Mammary epithelial cell (primary cell): ENCODE measurements at regions of chr3 and their contacts with region 1.

Region 1: GRCh38 chr3:196251918-196252317 is 35.6 kb downstream of the SLC51A start:
- DNase-seq: no peak
- H3K4me3 ChIP-seq: no peak overlapping the region
- H3K27ac ChIP-seq: no peak overlapping the region
- H3K4me1 ChIP-seq: no peaks in the 10 kb centered on the region
- H3K27me3 ChIP-seq: no peaks in the 10 kb centered on the region
- CTCF ChIP-seq: no peak

Region 2: DNA sequence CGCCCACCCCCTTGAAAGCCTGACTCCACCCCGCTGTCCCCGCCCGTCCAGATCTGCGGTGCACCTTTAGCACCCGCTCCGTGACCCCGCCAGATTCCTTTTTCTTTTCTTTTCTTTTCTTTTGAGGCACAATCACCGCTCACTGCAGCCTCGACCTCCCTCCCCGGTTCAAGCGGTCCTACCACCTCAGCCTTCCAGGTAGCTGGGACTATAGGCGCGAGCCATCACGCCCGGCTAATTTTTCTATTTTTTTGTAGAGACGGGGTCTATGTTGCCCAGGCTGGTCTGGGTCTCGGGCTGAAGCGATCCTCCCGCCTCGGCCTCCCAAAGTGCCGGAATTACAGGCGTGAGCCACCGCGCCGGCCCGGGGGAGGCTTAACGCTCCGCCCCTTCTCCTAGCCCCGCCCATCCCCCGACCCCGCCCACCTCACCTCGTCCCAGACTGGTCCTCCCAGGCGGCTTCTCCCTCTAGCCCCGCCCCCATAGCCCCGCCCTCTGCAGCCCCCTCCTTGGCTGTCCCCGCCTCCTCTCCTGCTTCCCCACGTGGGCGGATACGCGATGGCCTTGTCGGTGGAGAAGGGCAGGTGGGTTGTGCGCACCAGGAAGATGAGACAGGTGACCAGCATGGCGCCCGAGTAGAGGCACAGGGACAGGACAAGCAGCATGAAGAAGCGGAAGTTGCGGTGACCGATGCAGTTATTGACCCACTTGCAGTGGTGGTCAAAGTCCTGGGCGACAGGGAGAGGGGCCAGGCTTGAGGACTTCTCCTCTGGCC is 43.9 kb before region 1 on chr3:
- CTCF ChIA-PET with region 1: no interaction called
- dilution Hi-C with region 1: no loop called
- in situ Hi-C with region 1: no loop called
- intact Hi-C with region 1: no loop called
- DNase-seq: peak; percentile 30
- H3K4me3 ChIP-seq: peak overlapping the region; percentile 24 to 52 (median 38)
- H3K27ac ChIP-seq: no peak overlapping the region
- H3K4me1 ChIP-seq: no peaks in the 10 kb centered on the region
- H3K27me3 ChIP-seq: no peaks in the 10 kb centered on the region
- CTCF ChIP-seq: no peak

Region 3: GRCh38 chr3:196287440-196288148 is 35.7 kb after region 1 on chr3 and contains the start of gene PCYT1A:
- CTCF ChIA-PET with region 1: no interaction called
- dilution Hi-C with region 1: no loop called
- in situ Hi-C with region 1: no loop called
- intact Hi-C with region 1: loop called (anchors 1 kb)
- DNase-seq: peak; percentile 96
- H3K4me3 ChIP-seq: peak within 1 kb of the TSS; percentile 69 to 94 (median 87)
- H3K27ac ChIP-seq: peak within 1 kb of the TSS; percentile 90
- H3K4me1 ChIP-seq: peaks cover 13% of the 10 kb centered on the region
- H3K27me3 ChIP-seq: no peaks in the 10 kb centered on the region
- CTCF ChIP-seq: no peak
- total RNA-seq, gene PCYT1A: 103 to 175 TPM

Region 4: DNA sequence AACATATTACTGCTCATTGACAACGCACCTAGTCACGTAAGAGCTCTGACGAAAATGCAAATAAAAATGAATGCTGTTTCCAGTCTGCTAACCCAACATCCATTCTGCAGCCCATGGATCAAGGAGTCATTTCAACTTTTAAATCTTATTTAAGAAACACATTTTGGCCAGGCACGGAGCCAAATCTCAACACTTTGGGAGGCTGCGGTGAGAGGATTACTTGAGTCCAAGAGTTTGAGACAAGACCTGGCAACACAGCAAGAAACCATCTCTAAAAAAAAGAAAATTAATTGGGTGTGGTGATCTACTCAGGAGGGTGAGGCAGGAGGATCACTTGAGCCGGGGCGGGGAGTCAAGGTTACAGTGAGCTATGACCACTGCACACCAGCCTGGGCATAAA is 108.7 kb after region 1 on chr3:
- CTCF ChIA-PET with region 1: no interaction called
- dilution Hi-C with region 1: no loop called
- in situ Hi-C with region 1: no loop called
- intact Hi-C with region 1: loop called (anchors 5 kb)
- DNase-seq: no peak
- H3K4me3 ChIP-seq: no peak overlapping the region
- H3K27ac ChIP-seq: no peak overlapping the region
- H3K4me1 ChIP-seq: no peaks in the 10 kb centered on the region
- H3K27me3 ChIP-seq: no peaks in the 10 kb centered on the region
- CTCF ChIP-seq: no peak

Region 5: DNA sequence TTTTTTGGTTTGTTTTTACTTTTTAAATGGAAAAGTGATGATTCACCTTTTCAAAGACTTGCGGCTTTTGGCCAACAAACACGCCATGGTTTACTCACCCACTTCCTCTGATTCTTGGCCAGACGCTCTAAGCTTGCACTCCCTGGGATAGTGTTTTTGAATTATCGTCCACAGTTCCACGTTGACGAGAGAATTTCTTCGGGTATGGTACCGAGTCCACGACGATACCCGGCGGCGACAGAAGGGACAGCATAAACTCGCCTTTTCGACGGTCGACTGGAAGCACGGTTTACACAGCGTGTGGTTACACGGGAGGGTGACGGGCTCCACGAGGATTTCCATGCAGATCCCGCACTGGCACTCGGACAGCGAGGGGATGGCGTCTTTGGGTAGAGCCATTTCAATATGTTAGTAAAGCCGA is 250.9 kb after region 1 on chr3:
- CTCF ChIA-PET with region 1: no interaction called
- dilution Hi-C with region 1: no loop called
- in situ Hi-C with region 1: no loop called
- intact Hi-C with region 1: loop called (anchors 1 kb)
- DNase-seq: peak; percentile 83
- H3K4me3 ChIP-seq: peak overlapping the region; percentile 80 to 94 (median 89)
- H3K27ac ChIP-seq: peak overlapping the region; percentile 86
- H3K4me1 ChIP-seq: peaks cover 16% of the 10 kb centered on the region
- H3K27me3 ChIP-seq: no peaks in the 10 kb centered on the region
- CTCF ChIP-seq: no peak

Region 6: DNA sequence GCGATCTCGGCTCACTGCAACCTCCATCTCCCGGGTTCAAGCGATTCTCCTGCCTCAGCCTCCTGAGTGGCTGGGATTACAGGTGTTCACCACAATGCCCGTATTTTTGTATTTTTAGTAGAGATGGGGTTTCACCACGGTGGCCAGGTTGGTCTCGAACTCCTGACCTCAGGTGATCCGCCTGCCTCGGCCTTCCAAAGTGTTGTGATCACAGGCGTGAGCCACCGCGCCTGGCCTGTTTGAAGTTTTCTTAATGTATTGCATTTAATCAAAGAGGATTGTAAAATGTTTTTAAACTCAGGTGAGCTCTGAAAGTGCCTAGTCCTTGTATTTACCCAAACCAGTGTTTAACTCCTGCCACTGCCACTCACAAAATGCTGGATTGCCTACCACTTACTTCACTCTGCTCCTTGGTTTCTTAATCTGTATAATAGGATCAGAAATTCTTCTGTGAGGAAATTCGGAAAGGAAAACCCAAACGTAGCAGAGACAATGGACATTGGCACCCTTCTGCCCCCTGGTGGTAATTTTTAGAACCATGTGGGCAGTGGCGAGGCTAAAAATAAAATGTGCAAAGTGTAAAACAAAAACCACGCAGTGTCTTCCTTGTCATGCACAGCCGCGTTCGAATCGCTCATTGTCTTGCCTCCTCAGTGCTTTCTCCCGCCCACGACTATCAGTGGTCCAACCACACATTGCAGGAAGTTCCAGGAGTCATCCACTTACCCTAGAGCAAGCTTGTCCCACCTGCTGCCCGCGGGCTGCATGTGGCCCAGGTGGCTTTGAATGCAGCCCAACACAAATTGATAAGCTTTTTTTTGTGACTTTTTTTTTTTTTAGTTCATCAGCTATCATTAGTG is 432.9 kb after region 1 on chr3:
- CTCF ChIA-PET with region 1: no interaction called
- dilution Hi-C with region 1: no loop called
- in situ Hi-C with region 1: no loop called
- intact Hi-C with region 1: loop called (anchors 10 kb)
- DNase-seq: peak; percentile 35
- H3K4me3 ChIP-seq: no peak overlapping the region
- H3K27ac ChIP-seq: no peak overlapping the region
- H3K4me1 ChIP-seq: peaks cover 4% of the 10 kb centered on the region
- H3K27me3 ChIP-seq: no peaks in the 10 kb centered on the region
- CTCF ChIP-seq: peak; percentile 71 to 84